ENCODE measurements at regions of chr10 and their contacts with region 1.

Region 1: GRCh38 chr10:111598436-111599059 is 521.7 kb downstream of the ADRA2A start:
- DNase-seq: peak; percentile 58
- H3K4me3 ChIP-seq: peak overlapping the region in 1 of 2 experiments; percentile 29; a peak in 1 of 4 replicates
- H3K27ac ChIP-seq: no peak overlapping the region
- H3K4me1 ChIP-seq: no peaks in the 10 kb centered on the region; a peak in 1 of 4 replicates
- H3K27me3 ChIP-seq: no peaks in the 10 kb centered on the region
- CTCF ChIP-seq: peak; percentile 58
- EP300 ChIP-seq: no peak
- RAD21 ChIP-seq: peak; percentile 78

Region 2: DNA sequence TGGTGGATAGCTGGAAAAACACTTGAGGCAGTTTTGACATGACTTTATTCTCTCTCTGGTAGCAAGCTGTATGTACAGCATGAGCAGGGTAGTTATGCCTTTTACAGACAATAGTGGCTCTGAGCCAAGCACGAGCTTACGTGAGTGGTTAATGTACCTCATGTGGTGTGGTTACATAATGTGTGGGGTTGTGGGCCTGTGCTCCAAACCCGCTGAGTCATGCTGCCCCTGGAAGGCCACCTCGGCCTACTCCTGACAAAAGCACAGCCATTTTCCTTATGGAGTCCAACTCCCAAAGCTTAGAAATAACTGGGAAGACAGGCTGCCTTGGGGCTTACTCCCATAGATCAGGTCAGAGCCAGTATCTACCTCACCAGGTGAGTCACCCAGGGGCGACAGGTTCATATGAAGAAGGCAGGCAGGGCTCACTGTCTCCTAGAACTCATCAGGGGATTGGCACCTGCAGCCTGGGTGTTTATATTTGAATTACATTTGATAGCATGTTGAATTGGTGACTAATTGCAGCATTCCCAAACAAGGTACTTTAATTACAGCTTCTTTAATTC is 117.2 kb before region 1 on chr10:
- CTCF ChIA-PET with region 1: no interaction called
- POLR2A ChIA-PET with region 1: no interaction called
- DNase-seq: no peak
- H3K4me3 ChIP-seq: no peak overlapping the region
- H3K27ac ChIP-seq: no peak overlapping the region
- H3K4me1 ChIP-seq: no peaks in the 10 kb centered on the region
- H3K27me3 ChIP-seq: no peaks in the 10 kb centered on the region
- CTCF ChIP-seq: no peak
- EP300 ChIP-seq: no peak
- RAD21 ChIP-seq: no peak

Region 3: DNA sequence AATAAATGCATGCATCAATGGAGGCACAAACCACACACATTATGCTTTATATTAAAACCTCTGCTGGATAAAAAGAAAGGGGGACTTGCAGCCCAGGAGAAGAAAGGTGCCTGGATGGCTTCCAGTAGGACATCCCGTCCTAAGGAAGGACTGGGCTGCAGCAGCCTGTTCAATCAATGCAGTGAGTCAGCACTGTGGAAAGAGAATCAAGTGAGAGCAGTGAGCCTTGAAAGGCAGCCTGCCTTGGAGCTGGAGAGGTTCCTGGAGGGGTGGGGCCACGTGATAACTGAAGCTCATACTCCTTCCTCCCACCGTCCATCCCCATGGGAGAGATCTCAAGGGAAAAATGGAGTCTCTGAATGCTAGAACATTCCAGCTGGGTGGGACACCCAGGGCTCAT is 20.5 kb before region 1 on chr10:
- CTCF ChIA-PET with region 1: interaction called, 13 read pairs
- POLR2A ChIA-PET with region 1: no interaction called
- DNase-seq: no peak
- H3K4me3 ChIP-seq: no peak overlapping the region
- H3K27ac ChIP-seq: no peak overlapping the region
- H3K4me1 ChIP-seq: no peaks in the 10 kb centered on the region; a peak in 1 of 4 replicates
- H3K27me3 ChIP-seq: no peaks in the 10 kb centered on the region
- CTCF ChIP-seq: no peak
- EP300 ChIP-seq: no peak
- RAD21 ChIP-seq: no peak

Region 4: DNA sequence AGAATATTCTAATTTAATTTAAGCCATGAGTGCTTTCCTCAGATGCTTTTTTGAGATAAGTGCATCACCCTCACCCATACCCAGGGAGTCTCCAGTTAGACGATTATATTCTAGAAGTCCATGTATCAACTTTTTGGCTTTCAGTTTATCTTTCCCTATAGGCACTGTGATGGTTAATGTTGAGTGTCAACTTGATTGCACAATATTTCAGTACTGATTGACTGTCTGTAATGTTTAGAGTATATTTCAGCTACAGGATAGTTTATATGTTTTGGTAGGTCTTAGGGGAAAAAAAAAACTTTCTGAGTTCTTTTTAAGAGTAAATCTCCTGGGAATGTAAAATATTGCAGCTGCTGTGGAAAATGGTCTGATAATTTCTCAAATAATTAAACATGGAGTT is 13.7 kb after region 1 on chr10:
- CTCF ChIA-PET with region 1: interaction called, 16 read pairs
- POLR2A ChIA-PET with region 1: no interaction called
- DNase-seq: no peak
- H3K4me3 ChIP-seq: no peak overlapping the region
- H3K27ac ChIP-seq: no peak overlapping the region
- H3K4me1 ChIP-seq: no peaks in the 10 kb centered on the region
- H3K27me3 ChIP-seq: no peaks in the 10 kb centered on the region
- CTCF ChIP-seq: no peak
- EP300 ChIP-seq: no peak
- RAD21 ChIP-seq: no peak

Region 5: GRCh38 chr10:112026438-112026837 is 427.9 kb after region 1 on chr10:
- CTCF ChIA-PET with region 1: no interaction called
- POLR2A ChIA-PET with region 1: no interaction called
- DNase-seq: no peak
- H3K4me3 ChIP-seq: no peak overlapping the region
- H3K27ac ChIP-seq: no peak overlapping the region
- H3K4me1 ChIP-seq: peaks cover 0 to 4% of the 10 kb centered on the region in 2 experiments; a peak in 1 of 4 replicates
- H3K27me3 ChIP-seq: no peaks in the 10 kb centered on the region
- CTCF ChIP-seq: no peak
- EP300 ChIP-seq: no peak
- RAD21 ChIP-seq: no peak

Region 6: DNA sequence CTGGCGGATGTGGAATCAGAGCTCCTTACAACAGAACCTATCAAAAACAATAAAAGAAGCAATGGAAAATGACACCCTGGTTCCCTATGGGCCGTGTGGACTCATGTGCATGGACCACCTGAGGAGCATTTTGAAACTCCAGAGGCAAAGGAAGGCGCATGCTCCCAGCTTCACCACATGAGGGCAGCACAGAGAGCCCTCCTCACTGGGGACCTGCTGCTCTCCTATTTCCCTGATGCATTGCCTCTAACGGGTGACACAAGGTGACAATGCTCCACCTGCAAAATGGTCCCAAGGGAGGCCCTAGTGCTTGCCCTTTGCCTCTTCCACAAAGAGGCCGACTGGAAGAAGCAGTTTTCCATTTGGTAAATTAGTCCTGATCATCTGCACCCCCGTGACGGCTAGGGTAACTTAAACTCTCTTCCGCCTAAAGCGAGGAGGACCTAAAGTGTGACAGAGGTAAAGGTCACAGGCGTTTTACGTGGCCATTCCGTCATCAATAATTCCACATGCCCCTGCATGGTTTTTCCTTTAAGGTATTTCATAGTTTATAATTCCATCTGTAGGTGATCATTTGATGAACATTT is 517.3 kb after region 1 on chr10:
- CTCF ChIA-PET with region 1: no interaction called
- POLR2A ChIA-PET with region 1: no interaction called
- DNase-seq: peak; percentile 67
- H3K4me3 ChIP-seq: no peak overlapping the region; a peak in 1 of 4 replicates
- H3K27ac ChIP-seq: no peak overlapping the region
- H3K4me1 ChIP-seq: no peaks in the 10 kb centered on the region
- H3K27me3 ChIP-seq: no peaks in the 10 kb centered on the region
- CTCF ChIP-seq: peak; percentile 64
- EP300 ChIP-seq: no peak
- RAD21 ChIP-seq: peak; percentile 64

Measured in SK-N-SH (cell line).